ENCODE measurements at regions of chr3 and their contacts with region 1.

Region 1: GRCh38 chr3:169812332-169813235 is at the starts of genes LRRC34 and LRRIQ4:
- DNase-seq: peak; percentile 91
- H3K4me3 Mint-ChIP-seq: peak within 1 kb of the TSS; percentile 82
- H3K27ac Mint-ChIP-seq: peak within 1 kb of the TSS; percentile 79
- H3K4me1 Mint-ChIP-seq: peaks cover 19% of the 10 kb centered on the region
- H3K27me3 Mint-ChIP-seq: no peaks in the 10 kb centered on the region
- total RNA-seq, gene LRRC34: 3.8 to 3.9 TPM
- total RNA-seq, gene LRRIQ4: 0.12 TPM in 1 of 2 experiments, not detected in the other

Region 2: DNA sequence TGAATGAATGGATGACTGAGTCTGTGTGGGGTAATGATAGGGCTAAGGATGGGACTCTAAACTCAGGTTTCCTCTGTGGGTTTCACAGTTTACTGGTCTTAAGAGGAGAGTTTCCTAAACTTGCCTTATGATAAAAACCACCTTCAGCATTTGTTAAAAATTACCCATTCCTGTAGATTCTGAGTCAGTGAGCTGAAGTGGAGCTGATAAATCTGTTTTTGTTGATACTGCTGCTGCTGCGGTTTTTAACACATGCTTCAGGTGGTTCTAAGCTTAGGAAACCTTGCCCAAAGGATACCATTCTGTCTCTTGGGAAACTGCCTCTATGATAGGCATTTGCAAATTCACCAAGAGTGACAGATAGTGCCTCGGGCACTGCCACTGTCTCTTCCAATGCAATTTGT is 201.7 kb before region 1 on chr3:
- CTCF ChIA-PET with region 1: no interaction called
- intact Hi-C with region 1: no loop called
- DNase-seq: no peak
- H3K4me3 Mint-ChIP-seq: no peak overlapping the region
- H3K27ac Mint-ChIP-seq: no peak overlapping the region
- H3K4me1 Mint-ChIP-seq: no peaks in the 10 kb centered on the region
- H3K27me3 Mint-ChIP-seq: peaks cover 4% of the 10 kb centered on the region

Region 3: GRCh38 chr3:169772897-169773828 is 39.4 kb before region 1 on chr3 and contains the start of gene MYNN:
- CTCF ChIA-PET with region 1: no interaction called
- intact Hi-C with region 1: loop called (anchors 1 kb)
- DNase-seq: peak; percentile 94
- H3K4me3 Mint-ChIP-seq: peak within 1 kb of the TSS; percentile 94
- H3K27ac Mint-ChIP-seq: peak within 1 kb of the TSS; percentile 97
- H3K4me1 Mint-ChIP-seq: peaks cover 36% of the 10 kb centered on the region
- H3K27me3 Mint-ChIP-seq: no peaks in the 10 kb centered on the region
- total RNA-seq, gene MYNN: 12.0 to 13.5 TPM

Region 4: DNA sequence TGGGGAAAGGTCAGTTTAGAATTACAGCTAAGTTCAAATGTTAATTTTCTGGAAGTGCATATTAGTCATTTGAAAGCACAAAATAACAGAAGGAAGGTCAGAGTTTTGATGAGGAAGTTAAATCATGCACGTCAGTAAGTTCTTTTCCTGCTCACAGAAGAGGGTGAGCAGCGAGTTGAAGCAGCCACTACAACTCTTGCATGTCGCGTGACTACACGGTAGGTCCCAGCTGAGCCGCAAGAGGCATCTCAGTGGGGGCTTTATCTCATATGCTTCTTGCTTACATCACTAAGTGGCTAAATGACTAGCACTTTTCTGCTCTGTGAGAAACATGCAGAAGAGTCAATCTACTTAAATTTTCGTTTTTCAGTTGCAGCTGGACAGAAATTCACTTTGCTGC is 132.7 kb after region 1 on chr3:
- CTCF ChIA-PET with region 1: no interaction called
- intact Hi-C with region 1: loop called (anchors 5 kb)
- DNase-seq: peak; percentile 84
- H3K4me3 Mint-ChIP-seq: peak overlapping the region; percentile 30
- H3K27ac Mint-ChIP-seq: peak overlapping the region; percentile 78
- H3K4me1 Mint-ChIP-seq: peaks cover 37% of the 10 kb centered on the region
- H3K27me3 Mint-ChIP-seq: no peaks in the 10 kb centered on the region

Region 5: GRCh38 chr3:170037463-170038433 is 225.2 kb after region 1 on chr3 and contains the start of gene GPR160:
- CTCF ChIA-PET with region 1: no interaction called
- intact Hi-C with region 1: loop called (anchors 1 kb)
- DNase-seq: peak; percentile 89
- H3K4me3 Mint-ChIP-seq: peak within 1 kb of the TSS; percentile 84
- H3K27ac Mint-ChIP-seq: no peak within 1 kb of the TSS
- H3K4me1 Mint-ChIP-seq: peaks cover 24% of the 10 kb centered on the region
- H3K27me3 Mint-ChIP-seq: no peaks in the 10 kb centered on the region
- total RNA-seq, gene GPR160: 10.3 TPM

Region 6: DNA sequence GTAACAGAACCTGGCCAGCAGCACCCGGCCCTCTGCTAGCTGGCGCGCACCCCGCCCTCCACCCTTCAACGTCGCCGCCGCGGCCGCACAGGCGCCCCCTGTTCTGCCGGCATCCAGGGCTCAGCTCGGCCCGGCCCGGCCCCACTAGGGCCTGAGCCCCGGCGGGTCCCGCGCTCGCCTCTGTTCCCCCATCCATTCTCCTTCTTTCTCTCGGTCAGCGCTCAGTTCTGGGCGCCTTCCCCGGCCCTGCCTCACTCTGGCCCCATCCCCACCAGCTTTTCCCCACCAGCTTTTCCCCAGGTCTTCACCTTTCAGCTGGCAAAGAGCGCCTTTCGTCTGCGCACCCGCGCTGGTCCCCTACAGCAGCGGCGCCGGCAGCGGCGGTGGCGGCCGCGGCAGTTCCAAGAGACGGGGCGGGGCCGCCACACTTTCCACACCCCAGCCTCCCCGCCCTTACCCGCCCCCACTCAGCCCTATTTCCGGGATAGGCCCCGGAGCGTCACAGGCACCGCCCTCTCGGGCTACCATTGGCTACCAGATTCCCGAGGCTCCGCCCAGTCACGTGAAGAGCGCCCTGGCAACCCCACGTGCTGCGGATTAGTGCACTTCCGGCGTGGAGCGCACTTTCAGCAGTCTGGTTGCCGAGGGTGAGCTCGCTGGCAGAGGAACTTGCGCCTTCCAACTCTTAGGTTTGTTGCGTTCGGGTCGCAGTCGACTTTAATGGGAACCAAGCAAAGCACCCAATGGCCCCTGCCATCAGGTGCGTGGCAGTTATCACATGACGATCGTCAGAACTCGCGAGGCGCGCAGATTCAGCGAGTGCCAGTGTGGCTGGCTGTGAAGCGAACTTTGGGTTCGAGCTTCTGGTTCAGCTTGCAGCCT is 1095.9 kb after region 1 on chr3 and contains the start of gene EIF5A2:
- CTCF ChIA-PET with region 1: no interaction called
- intact Hi-C with region 1: loop called (anchors 5 kb)
- DNase-seq: peak; percentile 97
- H3K4me3 Mint-ChIP-seq: peak within 1 kb of the TSS; percentile 95
- H3K27ac Mint-ChIP-seq: peak within 1 kb of the TSS; percentile 80
- H3K4me1 Mint-ChIP-seq: peaks cover 22% of the 10 kb centered on the region
- H3K27me3 Mint-ChIP-seq: no peaks in the 10 kb centered on the region
- total RNA-seq, gene EIF5A2: 3.4 to 5.2 TPM

Measured in activated naive CD4-positive, alpha-beta T cell treated with anti-CD3 and anti-CD28 coated beads for 36 hours (primary cell).